AG04449 (cell line): ENCODE measurements at regions of chr4 and their contacts with region 1.

Region 1: GRCh38 chr4:122758033-122758432 is 25.5 kb downstream of the BBS12 start:
- DNase-seq: no peak
- H3K4me3 ChIP-seq: no peak overlapping the region
- CTCF ChIP-seq: peak; percentile 20

Region 2: GRCh38 chr4:121869841-121870656 is 888.0 kb before region 1 on chr4 and contains the start of gene BBS7:
- CTCF ChIA-PET with region 1: no interaction called
- POLR2A ChIA-PET with region 1: no interaction called
- DNase-seq: peak; percentile 58
- H3K4me3 ChIP-seq: peak within 1 kb of the TSS; percentile 90
- CTCF ChIP-seq: no peak

Region 3: GRCh38 chr4:122602277-122603142 is 155.5 kb before region 1 on chr4:
- CTCF ChIA-PET with region 1: interaction called, 17 read pairs
- POLR2A ChIA-PET with region 1: no interaction called
- DNase-seq: no peak
- H3K4me3 ChIP-seq: no peak overlapping the region
- CTCF ChIP-seq: peak; percentile 20

Region 4: DNA sequence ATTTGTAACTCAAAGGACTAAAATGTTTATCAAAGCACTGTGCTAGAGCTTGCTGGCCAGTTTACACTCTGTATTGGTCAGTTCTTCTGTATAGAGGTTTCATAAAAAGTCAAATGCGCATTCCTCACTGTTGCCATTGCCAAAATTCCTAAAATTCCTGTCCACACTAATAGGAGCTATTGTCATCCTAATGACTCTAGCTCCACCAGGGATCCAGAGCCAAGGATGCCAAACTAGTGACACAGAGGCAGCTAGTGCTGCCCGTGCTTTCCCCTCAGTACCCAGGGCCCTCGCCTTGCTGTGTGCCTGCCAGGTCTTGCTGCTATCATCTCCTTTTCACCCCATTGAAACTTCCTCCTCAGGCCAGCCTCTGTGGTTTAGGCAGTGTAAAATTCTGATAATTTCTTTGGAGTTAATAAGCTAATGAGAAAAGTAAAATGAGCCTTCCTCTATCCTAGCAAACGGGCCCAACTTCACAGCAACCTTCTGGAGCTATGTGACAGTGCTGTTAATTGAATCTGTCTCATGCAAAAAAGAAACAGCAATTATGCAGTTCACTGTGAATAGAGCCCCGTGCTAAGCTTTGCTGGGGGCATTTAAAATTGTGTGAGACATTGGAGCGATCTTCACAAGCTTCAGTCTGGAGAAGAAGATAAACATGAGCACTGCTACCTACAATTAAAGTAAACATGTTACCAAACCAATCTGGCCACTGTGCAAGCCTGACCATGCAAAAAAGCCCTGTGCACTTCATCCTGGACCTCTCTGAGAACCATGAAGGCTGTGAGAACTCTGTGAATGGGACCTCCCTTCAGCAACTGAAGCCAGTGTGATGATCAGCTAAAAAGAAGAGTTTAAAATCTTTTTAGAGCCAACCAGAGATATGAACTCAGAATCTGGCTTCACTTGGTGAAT is 25.5 kb after region 1 on chr4:
- CTCF ChIA-PET with region 1: interaction called, 11 read pairs
- POLR2A ChIA-PET with region 1: no interaction called
- DNase-seq: peak; percentile 80
- H3K4me3 ChIP-seq: no peak overlapping the region
- CTCF ChIP-seq: no peak

Region 5: GRCh38 chr4:122854447-122855352 is 96.7 kb after region 1 on chr4:
- CTCF ChIA-PET with region 1: interaction called, 16 read pairs
- POLR2A ChIA-PET with region 1: no interaction called
- DNase-seq: no peak
- H3K4me3 ChIP-seq: no peak overlapping the region
- CTCF ChIP-seq: no peak

Region 6: GRCh38 chr4:122922877-122923511 is 165.0 kb after region 1 on chr4:
- CTCF ChIA-PET with region 1: interaction called, 38 read pairs
- POLR2A ChIA-PET with region 1: no interaction called
- DNase-seq: no peak
- H3K4me3 ChIP-seq: peak overlapping the region; percentile 79
- CTCF ChIP-seq: no peak

Region 7: DNA sequence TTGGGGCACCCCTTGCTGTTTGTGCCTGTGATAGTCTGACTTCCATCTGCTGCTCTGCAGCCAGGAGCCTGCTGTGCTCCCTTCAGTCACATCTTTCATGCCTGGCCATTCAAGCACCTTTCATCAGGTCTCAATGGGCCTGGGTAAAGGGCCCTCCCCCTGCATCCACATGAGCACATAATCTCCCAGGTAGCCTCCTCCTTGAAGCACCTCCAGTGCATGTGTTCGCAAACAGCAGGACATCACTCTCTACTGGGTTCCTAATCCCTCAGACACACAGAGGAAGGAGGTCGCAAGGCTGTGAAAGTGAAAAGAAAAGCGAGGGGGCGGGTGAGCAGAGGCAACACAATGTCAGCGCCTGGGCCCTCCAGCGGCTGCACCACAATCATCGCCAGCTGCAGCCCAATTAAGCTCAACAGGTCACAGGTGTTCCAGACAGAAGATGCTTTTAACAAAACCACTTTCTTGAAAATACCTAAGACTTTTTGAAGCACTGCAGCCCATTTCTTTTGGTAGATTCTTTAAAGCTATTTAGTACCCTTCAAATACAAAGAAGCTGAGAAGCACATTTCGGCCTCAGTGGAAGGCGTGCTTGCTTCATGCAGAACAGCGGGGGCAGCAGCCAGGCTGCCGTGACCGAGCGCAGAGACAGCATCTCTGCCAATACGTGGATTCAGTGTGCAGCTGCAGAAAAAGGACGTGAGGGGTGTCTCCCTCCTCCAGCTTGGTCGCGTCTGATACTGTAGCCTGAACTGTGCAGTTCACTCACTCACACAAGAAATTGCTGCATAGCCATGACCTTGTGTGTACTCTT is 546.3 kb after region 1 on chr4:
- CTCF ChIA-PET with region 1: no interaction called
- POLR2A ChIA-PET with region 1: no interaction called
- DNase-seq: no peak
- H3K4me3 ChIP-seq: no peak overlapping the region
- CTCF ChIP-seq: no peak